Activated T-helper 1 cell treated with anti-CD3 and anti-CD28 coated beads, Interleukin-12 subunit alpha, Interleukin-12 subunit beta, Interleukin-2, Interleukin-4 antibody, amounts not matched to agents 30 ng/mL and 10 ng/mL and 1 ng/mL, durations not matched to agents 14 hours and 24 hours and 36 hours (primary cell): ENCODE measurements at regions of chrX and their contacts with region 1.

Region 1: DNA sequence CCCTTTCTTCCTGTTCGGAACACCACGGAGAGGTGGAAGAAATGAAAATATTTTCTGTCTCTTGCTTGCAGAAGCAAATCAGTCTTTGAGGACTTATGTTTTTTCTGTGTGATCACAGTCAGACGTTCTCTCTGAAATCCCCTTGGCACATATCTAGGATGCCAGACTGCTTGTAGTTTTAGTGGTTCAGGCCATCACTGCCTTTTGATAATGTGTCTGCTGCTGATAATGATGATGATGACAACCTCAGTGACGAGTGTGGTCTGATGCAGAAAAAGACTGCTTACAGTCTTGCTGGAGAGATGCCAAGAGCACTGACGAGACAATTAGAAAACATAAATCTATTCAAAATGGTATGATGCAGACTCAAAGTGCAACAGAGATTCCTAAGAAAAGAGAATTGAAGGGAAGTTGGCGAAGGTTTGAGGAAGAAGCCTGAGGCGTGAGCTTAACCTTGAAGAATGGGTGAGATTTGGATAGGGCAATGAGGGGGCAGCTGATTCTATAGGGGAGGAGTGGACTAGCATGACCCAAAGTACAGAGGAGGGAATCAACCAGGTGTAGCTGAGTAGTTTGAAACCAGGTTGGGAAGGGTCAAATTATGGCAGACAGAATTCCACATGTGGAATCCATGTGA is 7.9 kb downstream of the RAB33A start:
- DNase-seq: no peak
- H3K4me3 Mint-ChIP-seq: no peak overlapping the region
- H3K27ac Mint-ChIP-seq: no peak overlapping the region
- H3K4me1 Mint-ChIP-seq: peaks cover 37% of the 10 kb centered on the region
- H3K27me3 Mint-ChIP-seq: no peaks in the 10 kb centered on the region

Region 2: GRCh38 chrX:130211415-130212186 is 31.9 kb after region 1 on chrX:
- intact Hi-C with region 1: loop called (anchors 1 kb)
- DNase-seq: no peak
- H3K4me3 Mint-ChIP-seq: peak overlapping the region; percentile 68
- H3K27ac Mint-ChIP-seq: peak overlapping the region; percentile 94
- H3K4me1 Mint-ChIP-seq: peaks cover 21% of the 10 kb centered on the region
- H3K27me3 Mint-ChIP-seq: no peaks in the 10 kb centered on the region